ENCODE measurements at regions of chr5 and their contacts with region 1.

Region 1: GRCh38 chr5:35003018-35003957 is 44.5 kb downstream of the AGXT2 start:
- DNase-seq: peak; percentile 54
- ATAC-seq: peak; percentile 28
- H3K4me3 ChIP-seq: no peak overlapping the region
- H3K4me3 Mint-ChIP-seq: no peak overlapping the region
- H3K27ac ChIP-seq: no peak overlapping the region
- H3K27ac Mint-ChIP-seq: no peak overlapping the region
- H3K4me1 ChIP-seq: no peaks in the 10 kb centered on the region
- H3K4me1 Mint-ChIP-seq: no peaks in the 10 kb centered on the region
- H3K27me3 ChIP-seq: peaks cover 0 to 11% (median 5%) of the 10 kb centered on the region in 4 experiments
- H3K27me3 Mint-ChIP-seq: peaks cover 35% of the 10 kb centered on the region
- CTCF ChIP-seq: peak; percentile 84

Region 2: GRCh38 chr5:34474573-34475021 is 528.7 kb before region 1 on chr5:
- CTCF ChIA-PET with region 1: interaction called, 11 read pairs
- POLR2A ChIA-PET with region 1: no interaction called
- intact Hi-C with region 1: loop called (anchors 1 kb)
- DNase-seq: peak; percentile 50
- ATAC-seq: peak; percentile 69
- H3K4me3 ChIP-seq: no peak overlapping the region
- H3K4me3 Mint-ChIP-seq: no peak overlapping the region
- H3K27ac ChIP-seq: no peak overlapping the region
- H3K27ac Mint-ChIP-seq: no peak overlapping the region
- H3K4me1 ChIP-seq: no peaks in the 10 kb centered on the region
- H3K4me1 Mint-ChIP-seq: peaks cover 4% of the 10 kb centered on the region
- H3K27me3 ChIP-seq: peaks cover 0 to 5% (median 0%) of the 10 kb centered on the region in 4 experiments
- H3K27me3 Mint-ChIP-seq: peaks cover 21% of the 10 kb centered on the region
- CTCF ChIP-seq: peak; percentile 98

Region 3: GRCh38 chr5:34915139-34915855 is 88.0 kb before region 1 on chr5 and contains the starts of genes BRIX1 and RAD1:
- CTCF ChIA-PET with region 1: no interaction called
- POLR2A ChIA-PET with region 1: no interaction called
- intact Hi-C with region 1: no loop called
- DNase-seq: peak; percentile 97
- ATAC-seq: peak; percentile 99
- H3K4me3 ChIP-seq: peak within 1 kb of the TSS; percentile 82 to 99 (median 87)
- H3K4me3 Mint-ChIP-seq: no peak within 1 kb of the TSS
- H3K27ac ChIP-seq: peak within 1 kb of the TSS; percentile 57 to 80
- H3K27ac Mint-ChIP-seq: peak within 1 kb of the TSS; percentile 63
- H3K4me1 ChIP-seq: peaks cover 23 to 26% of the 10 kb centered on the region in 2 donors
- H3K4me1 Mint-ChIP-seq: peaks cover 32% of the 10 kb centered on the region
- H3K27me3 ChIP-seq: no peaks in the 10 kb centered on the region
- H3K27me3 Mint-ChIP-seq: no peaks in the 10 kb centered on the region
- CTCF ChIP-seq: no peak
- total RNA-seq, gene BRIX1: 26.4 and 29.3 TPM in 2 replicates
- total RNA-seq, gene RAD1: 25.9 and 26.1 TPM in 2 replicates

Region 4: DNA sequence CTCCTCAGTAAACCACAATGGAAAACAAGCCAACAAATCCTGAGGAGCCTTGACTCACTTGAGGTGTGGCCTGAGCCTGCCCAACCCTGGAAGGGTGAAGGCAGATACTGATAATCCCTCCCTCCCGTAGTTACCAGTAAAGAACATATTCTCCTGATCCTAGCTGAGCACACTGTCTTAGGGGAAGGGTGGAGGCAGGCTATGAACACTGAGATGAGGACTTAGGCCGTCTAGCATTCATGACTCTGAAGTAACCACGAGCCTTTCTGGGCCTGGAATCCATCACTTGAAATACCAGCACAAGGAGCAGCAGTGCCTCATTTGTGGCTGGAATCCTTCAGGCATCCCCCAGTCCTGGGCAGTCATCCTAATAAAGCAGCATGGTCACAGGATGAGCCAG is 351.5 kb after region 1 on chr5:
- CTCF ChIA-PET with region 1: no interaction called
- POLR2A ChIA-PET with region 1: no interaction called
- intact Hi-C with region 1: no loop called
- DNase-seq: no peak
- ATAC-seq: no peak
- H3K4me3 ChIP-seq: no peak overlapping the region
- H3K4me3 Mint-ChIP-seq: no peak overlapping the region
- H3K27ac ChIP-seq: no peak overlapping the region
- H3K27ac Mint-ChIP-seq: no peak overlapping the region
- H3K4me1 ChIP-seq: no peaks in the 10 kb centered on the region
- H3K4me1 Mint-ChIP-seq: no peaks in the 10 kb centered on the region
- H3K27me3 ChIP-seq: no peaks in the 10 kb centered on the region
- H3K27me3 Mint-ChIP-seq: peaks cover 8% of the 10 kb centered on the region
- CTCF ChIP-seq: no peak

Measured in B cell (primary cell).